Activated CD8-positive, alpha-beta T cell treated with anti-CD3 and anti-CD28 coated beads, Interleukin-2, amount 10 ng/mL, durations not matched to agents 7 days and 5 days (primary cell): ENCODE measurements at regions of chr5 and their contacts with region 1.

Region 1: GRCh38 chr5:62284946-62285891 is 20.8 kb upstream of the KIF2A start:
- DNase-seq: peak; percentile 74
- ATAC-seq: peak; percentile 86
- H3K4me3 Mint-ChIP-seq: peak overlapping the region; percentile 34
- H3K27ac Mint-ChIP-seq: peak overlapping the region; percentile 94
- H3K4me1 Mint-ChIP-seq: peaks cover 70% of the 10 kb centered on the region
- H3K27me3 Mint-ChIP-seq: no peaks in the 10 kb centered on the region

Region 2: DNA sequence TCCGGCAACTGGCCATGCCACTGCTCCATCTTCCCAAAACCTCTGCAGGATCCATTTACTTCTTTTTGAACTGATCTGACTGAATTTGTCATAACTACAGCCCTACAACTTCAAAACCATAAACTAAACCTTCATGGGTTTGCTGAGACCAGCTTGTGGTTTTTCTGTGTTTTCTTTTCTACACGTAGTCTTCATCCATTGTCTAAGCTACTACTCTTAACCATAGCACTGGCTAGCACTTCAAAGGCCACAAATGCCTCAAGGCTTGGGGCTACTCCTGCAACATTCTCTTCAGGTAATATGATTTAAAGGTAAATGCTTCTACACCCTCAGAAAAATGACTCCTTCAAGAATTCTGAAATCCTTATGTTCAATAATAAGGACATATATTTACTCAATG is 11.8 kb after region 1 on chr5:
- CTCF ChIA-PET with region 1: interaction called, 22 read pairs
- POLR2A ChIA-PET with region 1: interaction called, 7 read pairs
- DNase-seq: peak; percentile 68
- ATAC-seq: peak; percentile 74
- H3K4me3 Mint-ChIP-seq: peak overlapping the region; percentile 60
- H3K27ac Mint-ChIP-seq: peak overlapping the region; percentile 61
- H3K4me1 Mint-ChIP-seq: peaks cover 70% of the 10 kb centered on the region
- H3K27me3 Mint-ChIP-seq: no peaks in the 10 kb centered on the region

Region 3: GRCh38 chr5:62305715-62306322 is 20.6 kb after region 1 on chr5 and contains the start of gene KIF2A:
- CTCF ChIA-PET with region 1: interaction called, 18 read pairs
- POLR2A ChIA-PET with region 1: interaction called, 22 read pairs
- DNase-seq: peak; percentile 97
- ATAC-seq: peak; percentile 91
- H3K4me3 Mint-ChIP-seq: peak within 1 kb of the TSS; percentile 100
- H3K27ac Mint-ChIP-seq: peak within 1 kb of the TSS; percentile 100
- H3K4me1 Mint-ChIP-seq: peaks cover 48% of the 10 kb centered on the region
- H3K27me3 Mint-ChIP-seq: no peaks in the 10 kb centered on the region
- total RNA-seq, gene KIF2A: 149 to 151 TPM

Region 4: GRCh38 chr5:62326302-62326701 is 41.1 kb after region 1 on chr5:
- CTCF ChIA-PET with region 1: no interaction called
- POLR2A ChIA-PET with region 1: no interaction called
- DNase-seq: no peak
- ATAC-seq: no peak
- H3K4me3 Mint-ChIP-seq: no peak overlapping the region
- H3K27ac Mint-ChIP-seq: peak overlapping the region; percentile 22
- H3K4me1 Mint-ChIP-seq: peaks cover 63% of the 10 kb centered on the region
- H3K27me3 Mint-ChIP-seq: no peaks in the 10 kb centered on the region

Region 5: DNA sequence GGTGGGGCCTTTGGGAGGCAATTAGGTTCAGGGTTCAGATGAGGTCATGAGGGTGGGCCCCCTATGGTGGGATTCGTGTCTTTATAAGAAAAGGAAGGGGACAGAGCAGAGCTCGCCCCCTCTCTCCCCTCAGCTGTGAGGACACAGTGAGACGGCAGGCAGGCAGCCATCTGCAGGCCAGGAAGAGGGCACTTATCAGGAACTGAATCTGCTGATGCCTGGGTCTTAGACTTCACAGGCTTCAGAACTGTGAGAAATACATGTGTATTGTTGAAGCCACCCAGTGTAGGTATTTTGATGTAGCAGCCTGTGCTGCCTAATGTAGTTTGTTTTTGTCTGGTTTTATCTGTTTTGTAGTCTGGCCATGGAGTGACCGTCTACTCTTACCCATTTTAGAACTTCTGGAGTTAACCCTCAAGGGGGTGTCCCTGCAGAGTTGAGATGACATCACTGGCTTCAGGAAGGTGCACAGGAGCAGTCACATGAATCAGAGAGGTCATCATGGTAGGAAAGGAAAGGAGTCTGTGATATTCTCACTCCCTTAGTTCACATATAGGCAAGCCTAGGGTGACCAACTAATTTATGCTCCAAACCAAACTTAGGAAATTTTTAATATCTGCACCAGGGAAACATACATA is 364.4 kb after region 1 on chr5:
- CTCF ChIA-PET with region 1: no interaction called
- POLR2A ChIA-PET with region 1: no interaction called
- DNase-seq: no peak
- ATAC-seq: no peak
- H3K4me3 Mint-ChIP-seq: no peak overlapping the region
- H3K27ac Mint-ChIP-seq: peak overlapping the region; percentile 13
- H3K4me1 Mint-ChIP-seq: peaks cover 9% of the 10 kb centered on the region
- H3K27me3 Mint-ChIP-seq: no peaks in the 10 kb centered on the region